PC-9 (cell line): ENCODE measurements at regions of chr2 and their contacts with region 1.

Region 1: GRCh38 chr2:39728941-39729351 is 50.1 kb downstream of the THUMPD2 start:
- DNase-seq: peak; percentile 31 to 49
- H3K4me3 ChIP-seq: no peak overlapping the region
- H3K27ac ChIP-seq: no peak overlapping the region
- H3K4me1 ChIP-seq: no peaks in the 10 kb centered on the region
- H3K27me3 ChIP-seq: no peaks in the 10 kb centered on the region
- CTCF ChIP-seq: peak; percentile 94

Region 2: GRCh38 chr2:38535744-38536506 is 1193.0 kb before region 1 on chr2:
- CTCF ChIA-PET with region 1: interaction called, 13 read pairs
- POLR2A ChIA-PET with region 1: no interaction called
- intact Hi-C with region 1: no loop called
- DNase-seq: peak; percentile 61 to 84
- H3K4me3 ChIP-seq: peak overlapping the region; percentile 96
- H3K27ac ChIP-seq: no peak overlapping the region
- H3K4me1 ChIP-seq: no peaks in the 10 kb centered on the region
- H3K27me3 ChIP-seq: no peaks in the 10 kb centered on the region
- CTCF ChIP-seq: peak; percentile 96

Region 3: GRCh38 chr2:39234754-39235153 is 494.2 kb before region 1 on chr2:
- CTCF ChIA-PET with region 1: no interaction called
- POLR2A ChIA-PET with region 1: no interaction called
- intact Hi-C with region 1: loop called (anchors 10 kb)
- DNase-seq: peak in 1 of 2 experiments; percentile 69
- H3K4me3 ChIP-seq: no peak overlapping the region
- H3K27ac ChIP-seq: no peak overlapping the region
- H3K4me1 ChIP-seq: no peaks in the 10 kb centered on the region
- H3K27me3 ChIP-seq: no peaks in the 10 kb centered on the region
- CTCF ChIP-seq: no peak

Region 4: DNA sequence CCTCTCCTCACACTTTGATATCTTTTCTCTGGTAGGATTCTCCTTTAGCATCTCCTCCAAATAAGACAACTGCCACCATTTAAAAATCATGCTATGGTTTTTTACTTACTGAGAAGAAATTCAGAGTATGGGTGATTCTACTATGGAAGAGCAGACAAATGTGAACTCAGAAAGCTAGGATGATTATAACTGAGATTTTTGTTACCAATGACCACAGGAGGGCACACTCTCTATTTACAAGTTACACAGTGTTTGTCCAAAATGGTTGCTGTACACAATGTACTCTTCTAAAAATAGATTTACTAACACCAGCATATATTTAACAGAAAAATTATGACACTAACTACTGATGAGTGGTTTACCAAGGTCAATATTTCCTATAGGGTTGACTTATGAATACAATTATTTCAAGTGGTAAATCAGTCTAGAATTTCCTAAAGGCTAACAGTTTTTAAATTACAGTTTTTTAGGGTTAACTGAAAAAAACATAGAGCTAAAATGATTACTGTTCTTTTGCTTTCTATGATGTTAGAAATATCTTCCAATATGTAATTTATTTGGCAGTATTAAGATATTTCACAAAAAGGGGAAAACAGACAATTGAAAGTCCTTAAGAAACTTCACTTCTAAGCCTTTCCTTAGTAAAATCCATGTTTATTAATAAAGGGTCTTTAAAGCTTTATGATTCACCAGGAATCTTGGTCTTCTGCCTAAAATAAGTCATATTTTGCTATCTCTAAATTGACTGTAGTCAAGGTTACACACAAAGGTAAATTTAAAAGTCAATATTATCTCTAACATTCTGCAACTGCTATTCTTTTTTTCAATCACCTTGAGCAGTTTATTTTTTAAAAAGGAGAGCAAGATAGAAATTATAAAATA is 349.1 kb before region 1 on chr2:
- CTCF ChIA-PET with region 1: no interaction called
- POLR2A ChIA-PET with region 1: interaction called, 3 read pairs
- intact Hi-C with region 1: loop called (anchors 1 kb)
- DNase-seq: peak in 1 of 2 experiments; percentile 50
- H3K4me3 ChIP-seq: no peak overlapping the region
- H3K27ac ChIP-seq: no peak overlapping the region; the same call in 1 of the 2 replicates
- H3K4me1 ChIP-seq: no peaks in the 10 kb centered on the region
- H3K27me3 ChIP-seq: no peaks in the 10 kb centered on the region
- CTCF ChIP-seq: peak; percentile 84

Region 5: GRCh38 chr2:39593439-39594393 is 135.2 kb before region 1 on chr2:
- CTCF ChIA-PET with region 1: interaction called, 4 read pairs
- POLR2A ChIA-PET with region 1: no interaction called
- intact Hi-C with region 1: loop called (anchors 10 kb)
- DNase-seq: peak in 1 of 2 experiments; percentile 16
- H3K4me3 ChIP-seq: no peak overlapping the region
- H3K27ac ChIP-seq: no peak overlapping the region
- H3K4me1 ChIP-seq: no peaks in the 10 kb centered on the region
- H3K27me3 ChIP-seq: no peaks in the 10 kb centered on the region
- CTCF ChIP-seq: peak; percentile 63